ENCODE measurements at regions of chr17 and their contacts with region 1.

Region 1: GRCh38 chr17:38841141-38841485 is 12.4 kb downstream of the RPL23 start:
- DNase-seq: no peak

Region 2: GRCh38 chr17:38824899-38825761 is 16.0 kb before region 1 on chr17 and contains the start of gene CWC25:
- CTCF ChIA-PET with region 1: no interaction called
- POLR2A ChIA-PET with region 1: interaction called, 13 read pairs
- DNase-seq: peak; percentile 86